CD4-positive, alpha-beta memory T cell (primary cell): ENCODE measurements at regions of chr22 and their contacts with region 1.

Region 1: DNA sequence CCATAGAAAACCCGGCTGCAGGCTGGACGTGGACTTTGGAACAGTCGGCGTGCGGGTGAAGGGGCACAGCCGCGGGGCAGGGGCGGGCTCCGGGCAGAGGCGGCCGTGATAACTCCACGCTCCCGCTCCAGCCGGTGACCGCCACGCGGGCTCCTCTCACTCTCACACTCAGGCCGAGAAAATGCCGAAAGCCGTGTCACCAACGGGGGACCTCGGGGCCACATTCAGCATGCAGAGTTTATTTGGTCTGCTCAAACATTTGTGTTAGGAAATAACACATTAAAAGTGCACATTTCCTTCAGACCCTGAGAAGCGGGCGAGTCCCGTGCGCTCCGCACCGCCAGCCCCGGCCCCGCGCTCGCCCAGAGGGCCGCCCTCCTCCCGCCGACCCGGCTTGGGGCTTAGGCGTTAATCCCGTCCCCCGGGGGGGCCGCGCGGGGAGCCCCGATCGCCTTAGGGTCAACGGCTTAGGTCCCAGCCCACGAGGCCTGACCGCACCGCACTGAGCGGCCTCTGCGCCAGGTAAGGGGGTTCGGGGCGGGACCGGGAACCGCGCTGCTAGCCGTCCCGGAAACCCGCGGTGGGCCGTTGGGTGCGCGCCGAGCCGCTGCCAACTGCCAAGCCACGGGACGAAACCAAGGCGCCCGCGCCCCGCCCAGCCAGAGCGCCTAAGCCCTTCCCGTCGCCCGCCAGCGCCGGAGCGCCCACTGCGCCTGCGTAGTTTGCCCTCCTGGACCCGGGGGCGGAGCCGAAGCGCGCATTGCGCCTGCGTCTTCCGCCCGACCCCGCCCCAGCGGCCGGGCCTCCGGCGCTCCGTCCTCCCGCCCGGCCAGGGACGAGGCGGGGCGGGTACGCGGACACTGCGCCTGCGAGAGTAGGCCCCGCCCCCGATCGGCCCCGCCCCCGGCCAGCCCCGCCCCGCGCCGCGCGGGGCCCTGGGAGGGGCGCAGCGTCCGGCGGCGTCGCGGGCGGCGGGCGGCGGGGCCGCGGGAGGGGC is at the start of gene ZBED4:
- DNase-seq: peak; percentile 95 to 100 (median 99)
- H3K4me3 ChIP-seq: peak within 1 kb of the TSS; percentile 46 to 69
- H3K4me3 Mint-ChIP-seq: peak within 1 kb of the TSS; percentile 92 to 97 (median 94)
- H3K27ac ChIP-seq: peak within 1 kb of the TSS; percentile 75
- H3K27ac Mint-ChIP-seq: peak within 1 kb of the TSS; percentile 92 to 96 (median 94)
- H3K4me1 ChIP-seq: peaks cover 36% of the 10 kb centered on the region
- H3K4me1 Mint-ChIP-seq: peaks cover 29 to 64% (median 48%) of the 10 kb centered on the region in 4 donors
- H3K27me3 ChIP-seq: no peaks in the 10 kb centered on the region
- H3K27me3 Mint-ChIP-seq: no peaks in the 10 kb centered on the region
- total RNA-seq, gene ZBED4: 17.7 to 18.6 TPM

Region 2: GRCh38 chr22:49917974-49918910 is 65.0 kb after region 1 on chr22 and contains the starts of genes ALG12 and CRELD2:
- CTCF ChIA-PET with region 1: interaction called, 4 read pairs
- POLR2A ChIA-PET with region 1: interaction called, 8 read pairs
- intact Hi-C with region 1: loop called (anchors 1 kb)
- DNase-seq: peak; percentile 95 to 97 (median 95)
- H3K4me3 ChIP-seq: peak within 1 kb of the TSS; percentile 29 to 85
- H3K4me3 Mint-ChIP-seq: peak within 1 kb of the TSS; percentile 86 to 96 (median 94)
- H3K27ac ChIP-seq: peak within 1 kb of the TSS; percentile 88
- H3K27ac Mint-ChIP-seq: peak within 1 kb of the TSS; percentile 79 to 98 (median 95)
- H3K4me1 ChIP-seq: peaks cover 25% of the 10 kb centered on the region
- H3K4me1 Mint-ChIP-seq: peaks cover 13 to 39% (median 22%) of the 10 kb centered on the region in 4 donors
- H3K27me3 ChIP-seq: no peaks in the 10 kb centered on the region
- H3K27me3 Mint-ChIP-seq: no peaks in the 10 kb centered on the region
- total RNA-seq, gene ALG12: 19.6 to 27.2 TPM
- total RNA-seq, gene CRELD2: 36.0 to 36.2 TPM